ENCODE measurements at regions of chr21 and their contacts with region 1.

Region 1: DNA sequence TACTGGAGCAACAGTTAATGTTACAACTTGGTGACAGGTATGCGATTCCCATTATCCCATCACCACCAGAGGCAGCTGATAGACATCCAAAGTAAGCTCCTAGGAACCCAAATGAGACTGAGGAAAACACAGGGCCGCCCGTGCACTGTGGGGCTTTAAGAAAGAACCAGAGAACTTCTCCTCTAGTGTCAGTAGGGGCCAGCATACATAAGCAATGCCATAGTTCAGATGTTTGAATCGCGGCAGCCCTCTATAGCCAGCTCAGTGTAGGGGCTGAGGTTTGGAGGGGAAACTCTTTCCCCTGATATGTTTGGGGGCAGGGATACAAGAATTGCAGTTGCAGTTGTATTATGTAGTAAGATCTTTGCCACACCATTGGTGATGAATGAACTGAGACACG is 593.3 kb upstream of the NCAM2 start:
- DNase-seq: no peak
- H3K4me3 ChIP-seq: no peak overlapping the region
- H3K4me3 Mint-ChIP-seq: no peak overlapping the region
- H3K27ac ChIP-seq: no peak overlapping the region
- H3K27ac Mint-ChIP-seq: no peak overlapping the region
- H3K4me1 ChIP-seq: no peaks in the 10 kb centered on the region
- H3K4me1 Mint-ChIP-seq: no peaks in the 10 kb centered on the region
- H3K27me3 ChIP-seq: no peaks in the 10 kb centered on the region
- H3K27me3 Mint-ChIP-seq: no peaks in the 10 kb centered on the region

Region 2: DNA sequence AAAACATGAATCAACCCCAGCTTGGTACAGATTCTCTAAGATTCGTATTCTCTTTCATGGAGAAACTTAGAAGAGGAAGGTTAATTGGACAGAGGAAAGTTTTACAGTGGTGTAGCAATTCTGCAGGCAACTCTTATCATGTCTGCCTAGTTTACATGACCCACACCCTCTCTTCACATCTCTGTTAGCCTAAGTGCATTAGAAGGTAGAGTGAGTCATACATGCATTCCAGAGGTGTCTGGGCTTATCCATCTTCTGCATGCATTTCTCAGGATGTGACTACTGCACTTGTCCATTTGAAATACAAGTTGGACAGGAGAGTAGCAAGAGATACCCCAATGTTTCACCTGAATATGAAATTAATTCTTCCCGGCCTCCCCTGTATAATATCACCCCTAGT is 14.9 kb after region 1 on chr21:
- CTCF ChIA-PET with region 1: no interaction called
- POLR2A ChIA-PET with region 1: no interaction called
- intact Hi-C with region 1: loop called (anchors 2 kb)
- DNase-seq: no peak
- H3K4me3 ChIP-seq: no peak overlapping the region
- H3K4me3 Mint-ChIP-seq: no peak overlapping the region
- H3K27ac ChIP-seq: no peak overlapping the region
- H3K27ac Mint-ChIP-seq: no peak overlapping the region
- H3K4me1 ChIP-seq: no peaks in the 10 kb centered on the region
- H3K4me1 Mint-ChIP-seq: no peaks in the 10 kb centered on the region
- H3K27me3 ChIP-seq: no peaks in the 10 kb centered on the region
- H3K27me3 Mint-ChIP-seq: no peaks in the 10 kb centered on the region

Measured in CD4-positive, alpha-beta memory T cell (primary cell).